ENCODE measurements at regions of chr12 and their contacts with region 1.

Region 1: DNA sequence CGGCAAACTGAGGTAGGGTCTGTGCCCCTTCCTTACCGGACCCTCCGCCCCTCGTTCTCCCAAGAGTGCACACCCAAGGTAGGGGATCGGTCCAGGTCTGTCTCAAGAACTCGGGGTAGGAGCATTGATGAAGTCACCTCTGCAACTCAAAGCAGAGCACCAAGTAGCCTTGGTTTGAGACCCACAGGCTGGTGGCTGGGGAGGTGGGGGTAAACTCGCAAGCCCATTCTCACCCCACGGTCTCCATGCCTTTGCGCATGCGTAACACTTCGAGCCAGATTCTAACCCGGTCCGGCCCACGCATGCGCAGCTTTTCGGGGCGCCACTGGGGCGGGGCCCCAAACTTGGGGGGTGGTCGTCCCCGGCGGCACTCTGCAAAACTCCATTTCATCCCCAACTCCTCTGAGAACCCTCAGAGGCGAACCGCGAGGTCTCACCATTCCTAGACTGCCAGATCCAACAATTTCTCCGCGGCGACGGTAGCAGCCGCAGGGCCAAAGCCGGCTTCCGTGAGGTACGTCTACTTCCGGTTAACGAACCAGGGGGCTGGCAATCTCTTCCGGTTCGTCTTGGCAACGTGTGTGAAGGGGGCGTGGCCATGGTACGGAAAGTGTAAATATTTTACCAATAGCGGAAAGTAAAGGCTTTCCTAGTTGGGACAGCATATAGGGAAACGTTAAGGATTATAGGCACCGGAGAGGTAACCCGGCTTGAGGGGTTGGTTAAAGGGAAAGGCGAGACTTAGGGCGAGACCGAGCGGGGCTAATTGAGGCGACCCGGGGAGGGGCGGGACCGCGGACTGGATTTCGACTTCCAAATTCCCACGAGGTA is at the start of gene MCRS1:
- DNase-seq: peak; percentile 85
- H3K4me3 Mint-ChIP-seq: peak within 1 kb of the TSS; percentile 95
- H3K27ac Mint-ChIP-seq: peak within 1 kb of the TSS; percentile 96
- H3K4me1 Mint-ChIP-seq: peaks cover 57% of the 10 kb centered on the region
- H3K27me3 Mint-ChIP-seq: no peaks in the 10 kb centered on the region
- total RNA-seq, gene MCRS1: 77.1 and 77.9 TPM in 2 replicates

Region 2: GRCh38 chr12:49264738-49265515 is 302.9 kb before region 1 on chr12 and contains the start of gene TUBA1C:
- intact Hi-C with region 1: loop called (anchors 2 kb)
- DNase-seq: peak; percentile 92
- H3K4me3 Mint-ChIP-seq: peak within 1 kb of the TSS; percentile 99
- H3K27ac Mint-ChIP-seq: peak within 1 kb of the TSS; percentile 100
- H3K4me1 Mint-ChIP-seq: peaks cover 38% of the 10 kb centered on the region
- H3K27me3 Mint-ChIP-seq: no peaks in the 10 kb centered on the region
- total RNA-seq, gene TUBA1C: 261 and 270 TPM in 2 replicates

Region 3: GRCh38 chr12:49366652-49367380 is 201.0 kb before region 1 on chr12:
- intact Hi-C with region 1: loop called (anchors 1 kb)
- DNase-seq: peak; percentile 89
- H3K4me3 Mint-ChIP-seq: peak overlapping the region; percentile 87
- H3K27ac Mint-ChIP-seq: peak overlapping the region; percentile 94
- H3K4me1 Mint-ChIP-seq: peaks cover 48% of the 10 kb centered on the region
- H3K27me3 Mint-ChIP-seq: no peaks in the 10 kb centered on the region

Region 4: GRCh38 chr12:49538510-49539403 is 29.1 kb before region 1 on chr12 and contains the start of gene KCNH3:
- intact Hi-C with region 1: loop called (anchors 1 kb)
- DNase-seq: peak; percentile 80
- H3K4me3 Mint-ChIP-seq: peak within 1 kb of the TSS; percentile 70
- H3K27ac Mint-ChIP-seq: no peak within 1 kb of the TSS
- H3K4me1 Mint-ChIP-seq: no peaks in the 10 kb centered on the region
- H3K27me3 Mint-ChIP-seq: peaks cover 49% of the 10 kb centered on the region
- total RNA-seq, gene KCNH3: 0.93 and 1.6 TPM in 2 replicates

Region 5: DNA sequence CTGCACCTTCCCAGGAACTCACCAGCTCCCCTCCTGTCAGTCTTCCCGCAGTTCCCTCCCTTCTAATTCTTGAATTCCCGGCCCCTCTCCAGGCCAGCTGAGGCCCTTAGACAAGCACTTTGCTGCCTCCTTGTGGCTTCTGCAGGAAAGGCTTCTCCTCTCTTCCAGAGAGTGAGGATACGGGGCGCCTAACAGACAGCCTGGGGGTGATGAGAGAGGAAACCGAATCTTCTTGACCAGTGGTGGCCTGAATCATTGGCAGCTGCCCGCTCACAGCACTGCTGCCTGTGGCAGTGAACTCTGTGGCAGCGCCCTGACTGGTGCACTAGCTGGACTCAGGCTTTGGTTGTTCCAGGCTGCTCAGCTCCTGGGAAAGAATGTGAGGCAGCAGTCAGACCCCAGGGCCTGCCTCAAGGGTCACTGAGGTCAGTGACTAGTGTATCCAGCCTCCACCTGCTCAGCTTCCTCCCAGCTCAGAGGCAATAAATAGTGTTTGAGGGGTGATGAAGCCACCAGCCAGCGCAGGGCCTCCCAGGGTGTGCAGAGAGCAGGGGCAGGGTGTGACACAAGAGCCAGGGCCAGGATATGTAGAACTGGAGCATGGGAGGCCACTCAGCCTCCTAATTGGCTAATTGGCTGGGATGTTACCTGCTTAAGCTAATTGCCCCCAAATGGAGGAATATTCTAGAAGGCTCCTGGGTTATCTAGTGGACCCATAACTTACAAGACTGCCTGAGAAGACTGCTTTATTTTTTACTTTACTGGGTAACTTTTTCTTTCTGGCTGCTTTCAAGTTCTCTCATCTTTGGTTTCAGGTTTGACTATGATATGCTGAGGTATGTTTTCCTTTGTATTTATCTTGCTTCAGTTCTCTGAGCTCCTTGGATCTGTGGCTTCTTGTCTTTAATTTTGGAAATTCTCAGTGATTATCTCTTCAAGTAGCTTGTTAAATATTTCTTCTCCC is 13.0 kb after region 1 on chr12:
- intact Hi-C with region 1: loop called (anchors 1 kb)
- DNase-seq: peak; percentile 36
- H3K4me3 Mint-ChIP-seq: no peak overlapping the region
- H3K27ac Mint-ChIP-seq: peak overlapping the region; percentile 3
- H3K4me1 Mint-ChIP-seq: peaks cover 23% of the 10 kb centered on the region
- H3K27me3 Mint-ChIP-seq: no peaks in the 10 kb centered on the region

Region 6: GRCh38 chr12:49609746-49610089 is 41.9 kb after region 1 on chr12:
- intact Hi-C with region 1: no loop called
- DNase-seq: no peak
- H3K4me3 Mint-ChIP-seq: no peak overlapping the region
- H3K27ac Mint-ChIP-seq: no peak overlapping the region
- H3K4me1 Mint-ChIP-seq: no peaks in the 10 kb centered on the region
- H3K27me3 Mint-ChIP-seq: peaks cover 2% of the 10 kb centered on the region

Region 7: DNA sequence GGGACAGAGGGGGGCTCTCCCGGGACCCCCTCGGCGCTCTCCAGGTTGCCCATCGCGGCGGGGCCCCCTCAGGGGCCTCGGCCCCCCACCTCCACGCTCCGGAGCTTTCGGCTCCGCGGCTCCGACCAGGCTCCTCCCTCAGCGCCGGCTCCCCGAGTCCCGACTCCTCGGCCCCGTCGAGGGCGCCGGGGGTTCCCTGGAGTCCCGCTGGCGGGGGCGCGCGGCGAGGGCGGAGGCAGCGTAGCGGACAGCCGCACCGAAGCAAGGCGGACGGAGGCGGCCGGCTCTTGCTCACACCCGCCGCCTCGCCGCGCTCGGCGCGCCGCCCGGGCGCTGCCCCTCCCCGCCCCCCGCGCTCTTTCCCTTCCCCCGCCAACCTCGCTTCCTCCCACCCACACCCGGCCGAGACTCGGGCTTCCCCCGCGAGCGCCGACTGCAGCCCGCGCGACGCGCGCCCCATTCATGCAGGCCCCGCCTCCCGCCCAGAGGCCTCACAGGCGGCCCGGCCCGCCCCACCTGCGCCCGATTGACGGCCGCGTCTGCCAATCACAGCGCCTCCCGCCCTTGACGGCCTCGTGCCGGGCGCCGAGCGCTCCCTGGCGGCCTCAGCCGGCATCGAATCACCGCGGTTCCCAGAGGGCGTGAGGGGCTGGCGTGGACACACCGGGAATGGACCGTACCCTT is 139.4 kb after region 1 on chr12 and contains the start of gene FMNL3:
- intact Hi-C with region 1: loop called (anchors 1 kb)
- DNase-seq: peak; percentile 98
- H3K4me3 Mint-ChIP-seq: peak within 1 kb of the TSS; percentile 96
- H3K27ac Mint-ChIP-seq: peak within 1 kb of the TSS; percentile 89
- H3K4me1 Mint-ChIP-seq: peaks cover 48% of the 10 kb centered on the region
- H3K27me3 Mint-ChIP-seq: peaks cover 20% of the 10 kb centered on the region
- total RNA-seq, gene FMNL3: 43.0 and 46.1 TPM in 2 replicates

Measured in activated T-helper 1 cell treated with anti-CD3 and anti-CD28 coated beads, Interleukin-12 subunit alpha, Interleukin-12 subunit beta, Interleukin-2, Interleukin-4 antibody, amounts not matched to agents 30 ng/mL and 10 ng/mL and 1 ng/mL, durations not matched to agents 14 hours and 24 hours and 36 hours (primary cell).